PC-9 (cell line): ENCODE measurements at regions of chr6 and their contacts with region 1.

Region 1: DNA sequence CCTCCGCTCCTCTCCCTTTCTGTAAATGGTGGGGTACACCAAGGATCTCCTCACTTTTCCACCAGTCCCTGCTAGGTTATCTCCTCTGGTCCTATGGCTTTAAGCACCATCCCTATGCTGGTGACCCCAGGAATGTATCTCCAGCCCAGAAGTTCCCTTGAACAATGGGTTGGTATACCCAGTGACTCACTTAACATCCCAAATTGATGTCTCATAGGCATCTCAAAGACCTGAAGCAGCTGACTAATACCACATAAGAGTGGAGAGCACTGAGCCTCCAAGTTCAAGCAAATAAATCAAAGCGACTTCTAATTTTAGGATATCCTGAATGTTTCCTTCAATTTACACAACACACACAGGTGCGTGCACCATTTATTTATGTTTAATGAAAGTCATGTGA is 48.3 kb downstream of the ADGRF1 start:
- DNase-seq: peak; percentile 62 to 98
- H3K4me3 ChIP-seq: no peak overlapping the region
- H3K27ac ChIP-seq: peak overlapping the region; percentile 70
- H3K4me1 ChIP-seq: peaks cover 57% of the 10 kb centered on the region
- H3K27me3 ChIP-seq: no peaks in the 10 kb centered on the region
- CTCF ChIP-seq: no peak

Region 2: GRCh38 chr6:46704562-46704961 is 289.3 kb before region 1 on chr6:
- CTCF ChIA-PET with region 1: no interaction called
- POLR2A ChIA-PET with region 1: no interaction called
- intact Hi-C with region 1: loop called (anchors 10 kb)
- DNase-seq: peak in 1 of 2 experiments; percentile 49
- H3K4me3 ChIP-seq: no peak overlapping the region
- H3K27ac ChIP-seq: no peak overlapping the region
- H3K4me1 ChIP-seq: peaks cover 12% of the 10 kb centered on the region
- H3K27me3 ChIP-seq: no peaks in the 10 kb centered on the region
- CTCF ChIP-seq: peak; percentile 66

Region 3: DNA sequence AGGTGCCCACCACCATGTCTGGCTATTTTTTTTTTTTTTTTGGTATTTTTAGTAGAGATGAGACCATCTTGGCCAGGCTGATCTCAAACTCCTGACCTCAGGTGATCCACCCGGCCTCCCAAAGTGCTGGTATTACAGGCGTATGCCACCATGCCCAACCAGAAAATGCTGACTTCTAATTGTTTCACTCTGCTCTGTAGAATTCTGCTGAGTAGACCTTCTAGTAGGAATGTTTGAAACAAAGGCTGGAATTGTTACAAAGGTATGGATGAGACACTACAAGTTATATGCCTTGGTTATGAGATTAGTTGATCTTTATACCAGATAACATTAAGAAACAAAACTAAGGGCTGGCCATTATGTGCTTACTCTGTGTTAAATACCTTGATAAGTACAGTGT is 155.8 kb before region 1 on chr6:
- CTCF ChIA-PET with region 1: no interaction called
- POLR2A ChIA-PET with region 1: interaction called, 31 read pairs
- intact Hi-C with region 1: no loop called
- DNase-seq: no peak
- H3K4me3 ChIP-seq: no peak overlapping the region
- H3K27ac ChIP-seq: no peak overlapping the region
- H3K4me1 ChIP-seq: no peaks in the 10 kb centered on the region
- H3K27me3 ChIP-seq: no peaks in the 10 kb centered on the region
- CTCF ChIP-seq: no peak

Region 4: GRCh38 chr6:46925563-46926253 is 68.1 kb before region 1 on chr6:
- CTCF ChIA-PET with region 1: interaction called, 3 read pairs
- POLR2A ChIA-PET with region 1: interaction called, 6 read pairs
- intact Hi-C with region 1: loop called (anchors 5 kb)
- DNase-seq: peak; percentile 71 to 98
- H3K4me3 ChIP-seq: peak overlapping the region; percentile 9; the same call in 1 of the 2 replicates
- H3K27ac ChIP-seq: peak overlapping the region; percentile 95
- H3K4me1 ChIP-seq: peaks cover 66% of the 10 kb centered on the region
- H3K27me3 ChIP-seq: no peaks in the 10 kb centered on the region
- CTCF ChIP-seq: no peak

Region 5: GRCh38 chr6:47134476-47135189 is 140.8 kb after region 1 on chr6:
- CTCF ChIA-PET with region 1: no interaction called
- POLR2A ChIA-PET with region 1: no interaction called
- intact Hi-C with region 1: no loop called
- DNase-seq: peak; percentile 46 to 98
- H3K4me3 ChIP-seq: peak overlapping the region; percentile 43; the same call in 1 of the 2 replicates
- H3K27ac ChIP-seq: peak overlapping the region; percentile 100
- H3K4me1 ChIP-seq: peaks cover 73% of the 10 kb centered on the region
- H3K27me3 ChIP-seq: no peaks in the 10 kb centered on the region
- CTCF ChIP-seq: no peak

Region 6: DNA sequence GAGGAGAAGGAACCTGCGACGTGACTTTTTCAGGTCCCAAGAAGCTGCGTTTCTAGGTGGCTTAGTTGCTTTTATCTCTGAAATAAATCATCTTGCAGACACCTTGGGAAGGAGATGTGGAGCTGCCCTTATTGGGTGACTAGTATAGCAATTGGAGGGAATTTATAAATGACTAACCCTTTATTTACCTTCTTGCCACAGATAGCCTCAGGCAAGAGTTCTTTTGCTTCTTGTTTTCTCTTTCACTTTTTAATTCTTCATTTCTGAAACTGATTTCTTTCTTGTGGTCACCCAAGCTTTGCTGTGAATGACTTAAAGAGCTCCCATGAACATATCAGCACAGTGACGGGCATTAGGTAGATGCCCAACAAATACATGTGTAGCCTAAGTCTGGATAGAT is 707.5 kb after region 1 on chr6:
- CTCF ChIA-PET with region 1: no interaction called
- POLR2A ChIA-PET with region 1: no interaction called
- intact Hi-C with region 1: loop called (anchors 5 kb)
- DNase-seq: peak; percentile 31 to 97
- H3K4me3 ChIP-seq: peak overlapping the region; percentile 76; the same call in 1 of the 2 replicates
- H3K27ac ChIP-seq: peak overlapping the region; percentile 100
- H3K4me1 ChIP-seq: peaks cover 55% of the 10 kb centered on the region
- H3K27me3 ChIP-seq: no peaks in the 10 kb centered on the region
- CTCF ChIP-seq: no peak